Activated T-helper 2 cell treated with anti-CD3 and anti-CD28 coated beads, Interferon-gamma antibody, Interleukin-2, Interleukin-4, amounts not matched to agents 10 μg/mL and 5 μg/mL and 100 μg/mL, durations not matched to agents 14 hours and 24 hours and 36 hours (primary cell): ENCODE measurements at regions of chr18 and their contacts with region 1.

Region 1: GRCh38 chr18:46073474-46074331 is 1.6 kb upstream of the PSTPIP2 start:
- DNase-seq: peak; percentile 38
- H3K4me3 Mint-ChIP-seq: no peak overlapping the region
- H3K27ac Mint-ChIP-seq: peak overlapping the region; percentile 20
- H3K4me1 Mint-ChIP-seq: peaks cover 39% of the 10 kb centered on the region
- H3K27me3 Mint-ChIP-seq: no peaks in the 10 kb centered on the region

Region 2: GRCh38 chr18:45664824-45665763 is 408.6 kb before region 1 on chr18:
- intact Hi-C with region 1: loop called (anchors 1 kb)
- DNase-seq: peak; percentile 54
- H3K4me3 Mint-ChIP-seq: no peak overlapping the region
- H3K27ac Mint-ChIP-seq: peak overlapping the region; percentile 48
- H3K4me1 Mint-ChIP-seq: peaks cover 50% of the 10 kb centered on the region
- H3K27me3 Mint-ChIP-seq: peaks cover 14% of the 10 kb centered on the region

Region 3: DNA sequence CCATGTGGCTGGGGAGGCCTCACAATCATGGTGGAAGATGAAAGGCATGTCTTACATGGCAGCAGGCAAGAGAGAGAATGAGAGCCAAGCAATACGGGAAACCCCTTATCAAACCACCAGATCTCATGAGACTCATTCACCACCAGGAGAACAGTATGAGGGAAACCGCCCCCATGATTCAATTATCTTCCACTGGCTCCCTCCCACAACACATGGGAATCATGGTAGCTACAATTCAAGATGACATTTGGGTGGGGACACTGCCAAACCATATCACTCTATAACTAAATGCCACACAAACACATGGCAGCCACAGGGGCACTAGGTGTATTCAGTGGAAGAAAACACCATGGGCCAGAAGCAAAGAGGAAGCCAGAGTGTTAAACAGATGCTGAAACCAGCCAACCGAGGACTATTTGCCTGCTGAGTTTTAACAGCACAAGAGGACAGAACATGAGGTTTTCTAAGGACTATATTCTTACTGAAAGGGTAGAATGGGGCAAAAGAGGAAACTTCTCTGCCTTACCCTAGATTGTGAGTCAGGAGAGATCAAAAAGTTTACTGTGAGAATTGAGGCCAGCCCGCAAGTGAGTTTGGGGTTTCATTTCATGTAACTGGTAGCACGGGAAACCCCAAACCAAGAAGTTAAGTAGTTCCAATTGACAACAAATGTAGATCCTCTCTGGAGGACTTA is 199.1 kb before region 1 on chr18:
- intact Hi-C with region 1: loop called (anchors 2 kb)
- DNase-seq: peak; percentile 38
- H3K4me3 Mint-ChIP-seq: peak overlapping the region; percentile 6
- H3K27ac Mint-ChIP-seq: peak overlapping the region; percentile 89
- H3K4me1 Mint-ChIP-seq: peaks cover 24% of the 10 kb centered on the region
- H3K27me3 Mint-ChIP-seq: no peaks in the 10 kb centered on the region

Region 4: DNA sequence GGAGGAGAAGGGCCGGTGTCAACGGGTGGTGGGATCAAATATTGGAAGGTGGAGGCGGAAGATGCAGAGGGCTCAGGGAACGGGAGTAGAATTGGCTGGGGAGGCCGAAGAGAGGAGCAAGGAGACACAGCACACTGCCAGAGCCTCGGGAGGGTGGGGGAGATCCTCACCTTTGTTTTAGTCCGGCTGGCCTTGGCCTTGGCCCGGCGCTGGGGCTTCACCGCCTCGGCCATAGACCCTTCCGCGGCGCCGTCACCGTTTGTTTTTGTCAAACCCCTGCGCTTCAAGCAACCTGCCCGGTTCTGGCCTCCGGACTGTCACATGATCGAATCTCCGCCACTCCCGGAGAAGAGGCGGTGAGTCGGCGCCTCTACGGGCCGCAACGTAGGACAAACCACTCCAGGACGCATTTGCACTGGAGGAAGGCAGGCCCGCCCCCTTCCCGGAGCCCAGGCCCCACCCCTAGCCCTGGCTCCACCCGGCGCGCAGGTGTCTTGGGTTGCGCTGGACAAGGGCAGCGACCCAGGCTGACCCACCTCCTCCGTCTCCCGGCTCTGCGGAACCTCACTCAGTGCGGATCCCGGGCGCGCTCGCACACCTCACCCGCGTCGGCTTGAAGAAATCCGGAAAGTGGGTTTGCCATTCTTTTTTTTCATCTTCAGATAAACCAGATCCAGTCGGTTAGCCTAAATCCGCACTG is 106.5 kb before region 1 on chr18 and contains the start of gene EPG5:
- intact Hi-C with region 1: loop called (anchors 1 kb)
- DNase-seq: peak; percentile 92
- H3K4me3 Mint-ChIP-seq: peak within 1 kb of the TSS; percentile 98
- H3K27ac Mint-ChIP-seq: peak within 1 kb of the TSS; percentile 91
- H3K4me1 Mint-ChIP-seq: peaks cover 31% of the 10 kb centered on the region
- H3K27me3 Mint-ChIP-seq: no peaks in the 10 kb centered on the region
- total RNA-seq, gene EPG5: 17.1 and 17.4 TPM in 2 replicates

Region 5: GRCh38 chr18:45997700-45998151 is 76.0 kb before region 1 on chr18:
- intact Hi-C with region 1: loop called (anchors 1 kb)
- DNase-seq: peak; percentile 27
- H3K4me3 Mint-ChIP-seq: peak overlapping the region; percentile 28
- H3K27ac Mint-ChIP-seq: peak overlapping the region; percentile 85
- H3K4me1 Mint-ChIP-seq: peaks cover 41% of the 10 kb centered on the region
- H3K27me3 Mint-ChIP-seq: no peaks in the 10 kb centered on the region

Region 6: GRCh38 chr18:46028536-46028891 is 45.2 kb before region 1 on chr18:
- intact Hi-C with region 1: loop called (anchors 5 kb)
- DNase-seq: no peak
- H3K4me3 Mint-ChIP-seq: peak overlapping the region; percentile 79
- H3K27ac Mint-ChIP-seq: peak overlapping the region; percentile 13
- H3K4me1 Mint-ChIP-seq: peaks cover 19% of the 10 kb centered on the region
- H3K27me3 Mint-ChIP-seq: peaks cover 7% of the 10 kb centered on the region

Region 7: GRCh38 chr18:46097431-46097800 is 23.7 kb after region 1 on chr18:
- intact Hi-C with region 1: loop called (anchors 1 kb)
- DNase-seq: no peak
- H3K4me3 Mint-ChIP-seq: peak overlapping the region; percentile 97
- H3K27ac Mint-ChIP-seq: peak overlapping the region; percentile 96
- H3K4me1 Mint-ChIP-seq: peaks cover 17% of the 10 kb centered on the region
- H3K27me3 Mint-ChIP-seq: no peaks in the 10 kb centered on the region